CD8-positive, alpha-beta T cell (primary cell): ENCODE measurements at regions of chr3 and their contacts with region 1.

Region 1: DNA sequence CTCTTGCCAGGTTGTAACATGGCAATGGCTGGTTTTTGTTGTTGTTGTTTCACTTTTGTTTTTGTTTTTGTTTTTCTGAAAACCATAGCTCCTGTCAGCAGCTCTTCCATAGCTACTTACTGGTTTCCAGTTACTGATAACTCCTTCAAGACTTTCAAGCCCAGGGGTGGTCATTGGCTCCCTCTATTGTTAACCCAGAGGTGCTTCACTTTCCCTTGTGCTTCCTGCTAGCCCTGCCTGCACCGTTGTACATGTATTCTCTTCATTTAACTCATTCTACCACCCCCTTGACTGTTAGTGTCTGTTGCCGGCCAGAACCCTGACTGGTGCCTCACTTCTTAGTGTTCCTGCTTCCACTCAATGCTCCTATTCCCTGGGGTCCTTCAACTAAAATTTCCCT is 4.2 kb upstream of the TRAT1 start:
- DNase-seq: peak; percentile 16 to 82 (median 55)
- ATAC-seq: peak; percentile 91
- H3K4me3 ChIP-seq: no peak overlapping the region
- H3K4me3 Mint-ChIP-seq: no peak overlapping the region
- H3K27ac ChIP-seq: no peak overlapping the region
- H3K27ac Mint-ChIP-seq: peak overlapping the region; percentile 42
- H3K4me1 ChIP-seq: peaks cover 23% of the 10 kb centered on the region
- H3K4me1 Mint-ChIP-seq: peaks cover 33% of the 10 kb centered on the region
- H3K27me3 ChIP-seq: no peaks in the 10 kb centered on the region
- H3K27me3 Mint-ChIP-seq: no peaks in the 10 kb centered on the region
- CTCF ChIP-seq: peak; percentile 71

Region 2: DNA sequence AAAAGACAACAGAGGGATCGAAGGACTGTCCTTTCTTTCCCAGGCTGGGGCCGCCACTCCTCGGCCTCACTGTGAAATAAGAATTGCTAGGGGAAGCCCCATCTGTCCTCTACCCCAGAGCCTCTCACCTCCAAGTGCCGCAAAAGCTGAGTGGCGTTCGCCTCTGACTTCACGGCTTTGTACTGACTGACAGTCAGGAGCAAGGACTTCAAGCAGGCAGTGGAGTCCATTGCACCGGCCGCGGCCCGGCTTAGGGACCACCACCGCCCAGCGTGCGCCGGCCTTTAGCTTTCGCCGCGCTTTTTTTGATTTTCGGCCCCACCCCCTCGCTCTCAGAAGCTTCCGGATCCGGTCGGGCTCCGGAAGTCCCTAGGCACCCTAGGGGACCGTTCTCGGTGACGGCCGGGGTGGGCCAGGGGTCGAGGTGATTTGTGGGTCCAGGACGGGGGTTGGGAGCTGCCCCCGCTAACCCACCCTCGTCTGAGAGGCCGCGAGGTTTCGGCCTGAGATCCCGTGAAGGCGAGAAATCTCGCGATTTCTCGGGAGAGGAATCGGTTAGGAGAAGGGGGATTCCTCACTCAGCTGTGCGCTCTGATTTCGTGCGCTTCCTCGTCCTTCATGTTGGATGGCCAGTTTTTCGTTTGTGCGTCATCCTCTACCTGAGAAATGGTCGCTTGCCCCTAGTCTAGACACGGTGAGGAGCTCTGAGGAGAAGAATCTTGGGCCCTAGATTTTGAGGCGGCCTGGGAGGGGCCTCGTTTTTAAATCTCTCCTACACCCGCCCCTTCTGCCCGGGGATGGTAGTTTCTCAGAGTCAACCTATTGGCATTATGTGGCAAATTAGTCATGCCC is 229.0 kb before region 1 on chr3 and contains the starts of genes CIP2A and DZIP3:
- CTCF ChIA-PET with region 1: interaction called, 3 read pairs
- POLR2A ChIA-PET with region 1: interaction called, 3 read pairs
- intact Hi-C with region 1: loop called in 1 of 2 experiments (anchors 5 kb)
- DNase-seq: peak; percentile 71 to 96 (median 81)
- ATAC-seq: peak; percentile 79
- H3K4me3 ChIP-seq: peak within 1 kb of the TSS; percentile 90 to 93
- H3K4me3 Mint-ChIP-seq: peak within 1 kb of the TSS; percentile 97
- H3K27ac ChIP-seq: peak within 1 kb of the TSS; percentile 91 to 98
- H3K27ac Mint-ChIP-seq: peak within 1 kb of the TSS; percentile 99
- H3K4me1 ChIP-seq: peaks cover 14% of the 10 kb centered on the region
- H3K4me1 Mint-ChIP-seq: peaks cover 31% of the 10 kb centered on the region
- H3K27me3 ChIP-seq: no peaks in the 10 kb centered on the region
- H3K27me3 Mint-ChIP-seq: no peaks in the 10 kb centered on the region
- CTCF ChIP-seq: no peak
- total RNA-seq, gene CIP2A: 3.0 to 4.2 TPM
- total RNA-seq, gene DZIP3: 8.7 to 9.4 TPM

Region 3: GRCh38 chr3:108662130-108662738 is 156.2 kb before region 1 on chr3:
- CTCF ChIA-PET with region 1: interaction called, 73 read pairs
- POLR2A ChIA-PET with region 1: no interaction called
- intact Hi-C with region 1: loop called (anchors 1 kb)
- DNase-seq: peak in 7 of 9 experiments; percentile 12 to 85 (median 33)
- ATAC-seq: peak; percentile 84
- H3K4me3 ChIP-seq: no peak overlapping the region
- H3K4me3 Mint-ChIP-seq: no peak overlapping the region
- H3K27ac ChIP-seq: no peak overlapping the region
- H3K27ac Mint-ChIP-seq: no peak overlapping the region
- H3K4me1 ChIP-seq: no peaks in the 10 kb centered on the region
- H3K4me1 Mint-ChIP-seq: peaks cover 10% of the 10 kb centered on the region
- H3K27me3 ChIP-seq: no peaks in the 10 kb centered on the region
- H3K27me3 Mint-ChIP-seq: no peaks in the 10 kb centered on the region
- CTCF ChIP-seq: peak; percentile 83

Region 4: DNA sequence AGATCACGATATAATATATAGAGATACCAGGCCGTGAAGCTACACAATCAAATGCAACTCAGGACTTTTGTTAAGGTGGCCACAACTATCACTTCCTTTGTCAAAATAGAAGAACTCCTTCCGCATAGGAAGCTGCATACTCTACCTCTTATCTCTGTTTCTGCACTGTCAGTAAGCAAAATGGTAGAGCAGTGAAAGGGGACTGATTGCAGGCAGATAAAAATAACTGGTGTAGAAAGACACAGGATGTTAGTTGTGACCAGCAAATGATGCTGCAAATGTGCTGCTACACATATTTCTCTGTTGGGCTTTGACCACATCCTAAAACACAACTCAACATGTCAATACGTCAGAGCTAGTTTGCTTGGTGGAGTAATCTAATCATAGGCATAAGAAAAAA is 12.1 kb before region 1 on chr3:
- CTCF ChIA-PET with region 1: interaction called, 14 read pairs
- POLR2A ChIA-PET with region 1: interaction called, 13 read pairs
- intact Hi-C with region 1: loop called in 1 of 2 experiments (anchors 1 kb)
- DNase-seq: peak in 5 of 9 experiments; percentile 24 to 88 (median 49)
- ATAC-seq: peak; percentile 92
- H3K4me3 ChIP-seq: no peak overlapping the region
- H3K4me3 Mint-ChIP-seq: peak overlapping the region; percentile 40
- H3K27ac ChIP-seq: peak overlapping the region; percentile 25 to 70
- H3K27ac Mint-ChIP-seq: peak overlapping the region; percentile 71
- H3K4me1 ChIP-seq: peaks cover 19% of the 10 kb centered on the region
- H3K4me1 Mint-ChIP-seq: peaks cover 26% of the 10 kb centered on the region
- H3K27me3 ChIP-seq: no peaks in the 10 kb centered on the region
- H3K27me3 Mint-ChIP-seq: no peaks in the 10 kb centered on the region
- CTCF ChIP-seq: no peak

Region 5: GRCh38 chr3:108862865-108863798 is 44.7 kb after region 1 on chr3:
- CTCF ChIA-PET with region 1: interaction called, 5 read pairs
- POLR2A ChIA-PET with region 1: no interaction called
- intact Hi-C with region 1: loop called in 1 of 2 experiments (anchors 5 kb)
- DNase-seq: peak in 6 of 9 experiments; percentile 5 to 56 (median 26)
- ATAC-seq: peak; percentile 70
- H3K4me3 ChIP-seq: no peak overlapping the region
- H3K4me3 Mint-ChIP-seq: no peak overlapping the region
- H3K27ac ChIP-seq: peak overlapping the region in 1 of 2 experiments; percentile 63
- H3K27ac Mint-ChIP-seq: peak overlapping the region; percentile 85
- H3K4me1 ChIP-seq: peaks cover 13% of the 10 kb centered on the region
- H3K4me1 Mint-ChIP-seq: peaks cover 39% of the 10 kb centered on the region
- H3K27me3 ChIP-seq: no peaks in the 10 kb centered on the region
- H3K27me3 Mint-ChIP-seq: no peaks in the 10 kb centered on the region
- CTCF ChIP-seq: no peak